Endothelial cell of umbilical vein (primary cell): ENCODE measurements at regions of chr1 and their contacts with region 1.

Region 1: DNA sequence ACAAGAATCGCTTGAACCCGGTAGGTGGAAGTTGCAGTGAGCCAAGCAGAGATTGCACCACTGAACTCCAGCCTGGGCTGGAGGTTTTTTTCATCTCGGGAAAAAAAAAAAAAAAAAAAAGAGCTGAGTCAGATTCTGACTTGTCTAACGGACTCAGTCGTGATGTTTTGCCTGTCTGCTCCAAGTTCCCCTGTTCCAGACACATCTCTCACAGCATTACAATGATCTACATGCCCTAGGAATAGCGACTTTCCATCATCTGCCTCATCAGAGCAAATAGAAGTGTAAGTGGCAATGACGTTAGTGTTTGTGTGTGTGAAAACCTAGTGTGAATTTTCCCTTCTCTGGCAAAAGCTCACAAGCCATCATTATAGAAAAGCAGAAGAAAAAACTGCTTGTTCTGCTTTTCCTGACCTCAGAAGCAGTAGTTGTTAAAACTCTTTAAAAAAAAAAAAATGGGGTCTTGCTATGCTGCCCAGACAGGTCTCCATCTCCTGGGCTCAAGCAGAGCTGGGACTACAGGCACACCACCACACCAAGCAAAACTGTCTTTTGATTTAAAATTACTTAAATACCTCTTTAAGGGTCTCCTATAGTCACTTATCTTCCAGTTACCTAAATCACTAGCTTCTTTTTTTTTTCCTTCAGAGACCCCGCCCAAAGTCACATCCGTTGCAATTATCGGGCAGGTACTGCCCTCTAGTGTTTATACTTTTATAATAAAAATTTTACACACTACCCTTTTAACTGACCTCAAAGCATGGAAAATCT is 37.3 kb downstream of the PLEKHO1 start:
- DNase-seq: peak; percentile 40
- H3K4me3 ChIP-seq: no peak overlapping the region
- H3K27ac ChIP-seq: no peak overlapping the region
- H3K4me1 ChIP-seq: no peaks in the 10 kb centered on the region
- H3K27me3 ChIP-seq: peaks cover 0 to 3% of the 10 kb centered on the region in 2 experiments
- CTCF ChIP-seq: peak; percentile 13 to 21
- POLR2A ChIP-seq: no peak

Region 2: GRCh38 chr1:149886396-149887195 is 300.4 kb before region 1 on chr1:
- CTCF ChIA-PET with region 1: interaction called, 33 read pairs
- POLR2A ChIA-PET with region 1: interaction called, 7 read pairs
- dilution Hi-C with region 1: no loop called
- intact Hi-C with region 1: loop called (anchors 1 kb)
- DNase-seq: peak; percentile 98
- H3K4me3 ChIP-seq: peak overlapping the region; percentile 19 to 91 (median 67)
- H3K27ac ChIP-seq: peak overlapping the region; percentile 97
- H3K4me1 ChIP-seq: peaks cover 16% of the 10 kb centered on the region
- H3K27me3 ChIP-seq: no peaks in the 10 kb centered on the region
- CTCF ChIP-seq: no peak
- POLR2A ChIP-seq: peak; percentile 97

Region 3: GRCh38 chr1:150051089-150051373 is 135.9 kb before region 1 on chr1:
- CTCF ChIA-PET with region 1: interaction called, 20 read pairs
- POLR2A ChIA-PET with region 1: no interaction called
- dilution Hi-C with region 1: no loop called
- intact Hi-C with region 1: no loop called
- DNase-seq: no peak
- H3K4me3 ChIP-seq: no peak overlapping the region
- H3K27ac ChIP-seq: no peak overlapping the region
- H3K4me1 ChIP-seq: no peaks in the 10 kb centered on the region
- H3K27me3 ChIP-seq: no peaks in the 10 kb centered on the region
- CTCF ChIP-seq: no peak
- POLR2A ChIP-seq: no peak

Region 4: DNA sequence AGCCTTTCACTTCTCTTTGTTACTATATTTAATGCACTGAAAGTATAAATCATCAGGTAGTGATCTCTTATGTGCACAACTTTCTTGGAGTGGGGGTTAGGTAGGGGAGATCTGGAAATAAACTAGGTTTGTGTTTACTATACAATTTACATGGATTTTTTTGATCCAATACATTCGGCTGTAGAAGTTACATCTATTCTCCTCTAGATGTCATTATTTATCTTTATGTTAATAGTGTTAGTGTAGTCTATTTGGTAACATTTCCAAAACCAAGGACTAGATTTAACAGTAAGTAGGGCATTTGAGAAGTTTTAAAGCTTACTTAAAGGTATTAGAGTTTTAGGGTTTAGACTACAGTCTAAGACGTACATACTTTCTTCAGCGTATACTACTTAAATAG is 114.0 kb before region 1 on chr1:
- CTCF ChIA-PET with region 1: interaction called, 92 read pairs
- POLR2A ChIA-PET with region 1: no interaction called
- dilution Hi-C with region 1: no loop called
- intact Hi-C with region 1: loop called (anchors 1 kb)
- DNase-seq: peak; percentile 40
- H3K4me3 ChIP-seq: no peak overlapping the region
- H3K27ac ChIP-seq: no peak overlapping the region
- H3K4me1 ChIP-seq: peaks cover 7% of the 10 kb centered on the region
- H3K27me3 ChIP-seq: no peaks in the 10 kb centered on the region
- CTCF ChIP-seq: peak in 1 of 2 donors; percentile 20
- POLR2A ChIP-seq: no peak

Region 5: GRCh38 chr1:150102986-150103385 is 84.0 kb before region 1 on chr1:
- CTCF ChIA-PET with region 1: interaction called, 12 read pairs
- POLR2A ChIA-PET with region 1: no interaction called
- dilution Hi-C with region 1: no loop called
- intact Hi-C with region 1: no loop called
- DNase-seq: peak; percentile 24
- H3K4me3 ChIP-seq: no peak overlapping the region
- H3K27ac ChIP-seq: no peak overlapping the region
- H3K4me1 ChIP-seq: no peaks in the 10 kb centered on the region
- H3K27me3 ChIP-seq: no peaks in the 10 kb centered on the region
- CTCF ChIP-seq: no peak
- POLR2A ChIP-seq: no peak

Region 6: GRCh38 chr1:150168960-150169601 is 17.9 kb before region 1 on chr1:
- CTCF ChIA-PET with region 1: interaction called, 66 read pairs
- POLR2A ChIA-PET with region 1: no interaction called
- dilution Hi-C with region 1: no loop called
- intact Hi-C with region 1: no loop called
- DNase-seq: peak; percentile 64
- H3K4me3 ChIP-seq: no peak overlapping the region
- H3K27ac ChIP-seq: no peak overlapping the region
- H3K4me1 ChIP-seq: no peaks in the 10 kb centered on the region
- H3K27me3 ChIP-seq: no peaks in the 10 kb centered on the region
- CTCF ChIP-seq: peak; percentile 83 to 85
- POLR2A ChIP-seq: no peak

Region 7: GRCh38 chr1:150235852-150236613 is 49.1 kb after region 1 on chr1 and contains the start of gene ANP32E:
- CTCF ChIA-PET with region 1: interaction called, 6 read pairs
- POLR2A ChIA-PET with region 1: interaction called, 10 read pairs
- dilution Hi-C with region 1: no loop called
- intact Hi-C with region 1: no loop called
- DNase-seq: peak; percentile 99
- H3K4me3 ChIP-seq: peak within 1 kb of the TSS; percentile 72 to 95 (median 86)
- H3K27ac ChIP-seq: peak within 1 kb of the TSS; percentile 61
- H3K4me1 ChIP-seq: peaks cover 11% of the 10 kb centered on the region
- H3K27me3 ChIP-seq: no peaks in the 10 kb centered on the region
- CTCF ChIP-seq: no peak
- POLR2A ChIP-seq: peak; percentile 98
- total RNA-seq, gene ANP32E: 53.4 and 57.9 TPM in 2 replicates

Region 8: GRCh38 chr1:150268705-150269403 is 81.9 kb after region 1 on chr1 and contains the start of gene APH1A:
- CTCF ChIA-PET with region 1: no interaction called
- POLR2A ChIA-PET with region 1: no interaction called
- dilution Hi-C with region 1: no loop called
- intact Hi-C with region 1: no loop called
- DNase-seq: peak; percentile 95
- H3K4me3 ChIP-seq: peak within 1 kb of the TSS; percentile 51 to 84 (median 77)
- H3K27ac ChIP-seq: peak within 1 kb of the TSS; percentile 89
- H3K4me1 ChIP-seq: peaks cover 40% of the 10 kb centered on the region
- H3K27me3 ChIP-seq: no peaks in the 10 kb centered on the region
- CTCF ChIP-seq: no peak
- POLR2A ChIP-seq: peak; percentile 26
- total RNA-seq, gene APH1A: 157 and 165 TPM in 2 replicates

Region 9: DNA sequence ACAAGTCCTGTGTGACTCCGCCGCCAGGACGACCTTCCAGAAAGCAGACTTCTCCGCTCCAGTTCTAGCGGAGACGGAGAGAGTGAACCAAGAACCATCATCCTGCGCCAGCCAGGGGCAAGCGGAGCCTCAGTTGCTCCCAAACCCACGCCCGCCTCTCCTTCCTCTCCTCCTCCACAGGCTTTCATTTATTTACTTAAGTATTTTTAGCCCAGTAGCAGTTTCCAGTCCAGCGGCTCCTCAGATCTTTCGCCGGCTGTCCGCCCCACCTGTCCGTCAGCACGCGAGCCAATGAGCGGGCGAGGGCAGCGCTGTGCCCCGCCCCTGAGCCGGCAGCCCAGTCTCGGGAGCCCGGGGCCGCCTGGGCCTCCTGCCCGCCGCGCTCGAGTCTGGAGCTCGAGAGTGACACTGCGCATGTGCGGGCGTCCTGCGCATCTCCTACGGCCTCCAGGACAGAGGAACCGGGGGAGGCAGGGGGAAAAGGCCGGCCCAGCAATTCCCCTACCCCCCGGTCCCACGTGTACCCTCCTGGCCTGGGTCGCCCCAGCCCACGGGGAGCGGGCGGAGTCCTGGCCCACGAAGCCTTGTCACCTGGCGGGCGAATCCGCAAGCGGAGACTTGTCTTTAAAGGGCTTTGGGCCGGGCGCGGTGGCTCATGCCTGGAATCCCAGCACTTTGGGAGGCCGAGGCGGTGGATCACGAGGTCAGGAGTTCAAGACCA is 328.5 kb after region 1 on chr1 and contains the start of gene FALEC:
- CTCF ChIA-PET with region 1: no interaction called
- POLR2A ChIA-PET with region 1: no interaction called
- dilution Hi-C with region 1: no loop called
- intact Hi-C with region 1: no loop called
- DNase-seq: peak; percentile 97
- H3K4me3 ChIP-seq: peak within 1 kb of the TSS; percentile 39 to 77 (median 48)
- H3K27ac ChIP-seq: peak within 1 kb of the TSS; percentile 9
- H3K4me1 ChIP-seq: peaks cover 6% of the 10 kb centered on the region
- H3K27me3 ChIP-seq: no peaks in the 10 kb centered on the region
- CTCF ChIP-seq: no peak
- POLR2A ChIP-seq: peak; percentile 44
- total RNA-seq, gene FALEC: not detected in 2 replicates